ENCODE measurements at regions of chr12 and their contacts with region 1.

Region 1: DNA sequence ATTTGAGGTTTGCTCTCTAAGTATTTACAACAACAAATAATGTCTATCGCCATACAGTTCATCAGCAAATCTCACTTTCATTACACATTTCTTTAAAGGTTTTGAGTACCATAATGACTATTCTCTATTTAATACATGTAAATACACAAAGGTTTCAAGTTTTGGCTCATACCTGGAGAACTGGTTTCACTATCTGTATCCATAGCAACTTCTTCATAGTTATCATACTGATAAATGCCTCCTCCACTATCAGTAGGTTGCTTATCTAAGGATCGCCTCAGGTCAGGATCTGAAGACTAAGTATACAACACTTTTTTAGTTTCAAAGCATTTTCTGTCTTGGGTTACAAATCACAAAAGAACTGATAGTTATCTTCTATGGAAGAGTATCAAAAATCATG is 21.4 kb downstream of the ZFC3H1 start:
- DNase-seq: no peak
- ATAC-seq: no peak
- H3K4me3 Mint-ChIP-seq: no peak overlapping the region
- H3K27ac Mint-ChIP-seq: no peak overlapping the region
- H3K4me1 Mint-ChIP-seq: peaks cover 13% of the 10 kb centered on the region
- H3K27me3 Mint-ChIP-seq: no peaks in the 10 kb centered on the region
- CTCF ChIP-seq: no peak

Region 2: DNA sequence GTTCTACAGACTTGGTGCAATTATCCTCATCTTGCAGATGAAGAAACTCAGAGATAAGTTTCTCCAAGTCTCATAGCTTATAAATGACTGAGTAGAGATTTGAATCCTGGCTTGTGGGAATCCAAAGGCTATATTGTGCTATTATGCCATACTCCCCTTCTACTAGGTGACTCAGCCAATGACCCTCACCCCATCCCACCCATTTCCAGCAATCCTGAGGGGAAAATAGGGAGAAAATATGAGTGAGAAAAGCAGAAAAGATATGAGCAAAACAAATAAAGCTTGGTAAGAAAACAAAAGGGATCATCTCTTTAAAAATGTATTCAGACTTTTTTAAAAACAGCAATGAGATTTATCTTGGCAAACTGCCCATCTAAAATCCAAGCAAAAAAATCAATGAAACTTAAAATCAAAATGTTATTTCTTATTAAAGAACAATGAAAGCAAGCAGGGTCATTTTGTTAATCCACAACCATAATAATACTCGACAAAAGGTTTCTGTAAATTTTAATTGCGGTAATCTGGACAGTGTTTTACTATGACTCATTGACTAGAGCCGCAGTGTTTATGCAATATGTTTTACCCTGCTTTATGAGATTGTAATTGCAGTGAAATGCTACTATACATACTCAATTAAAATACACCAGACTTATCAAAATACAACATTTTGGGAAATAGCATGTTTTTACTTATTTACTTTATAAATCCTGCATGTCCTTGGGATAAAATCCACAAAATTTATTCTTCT is 215.8 kb before region 1 on chr12:
- CTCF ChIA-PET with region 1: no interaction called
- POLR2A ChIA-PET with region 1: no interaction called
- intact Hi-C with region 1: no loop called
- DNase-seq: no peak
- ATAC-seq: no peak
- H3K4me3 Mint-ChIP-seq: no peak overlapping the region
- H3K27ac Mint-ChIP-seq: no peak overlapping the region
- H3K4me1 Mint-ChIP-seq: no peaks in the 10 kb centered on the region
- H3K27me3 Mint-ChIP-seq: peaks cover 10% of the 10 kb centered on the region
- CTCF ChIP-seq: no peak

Region 3: DNA sequence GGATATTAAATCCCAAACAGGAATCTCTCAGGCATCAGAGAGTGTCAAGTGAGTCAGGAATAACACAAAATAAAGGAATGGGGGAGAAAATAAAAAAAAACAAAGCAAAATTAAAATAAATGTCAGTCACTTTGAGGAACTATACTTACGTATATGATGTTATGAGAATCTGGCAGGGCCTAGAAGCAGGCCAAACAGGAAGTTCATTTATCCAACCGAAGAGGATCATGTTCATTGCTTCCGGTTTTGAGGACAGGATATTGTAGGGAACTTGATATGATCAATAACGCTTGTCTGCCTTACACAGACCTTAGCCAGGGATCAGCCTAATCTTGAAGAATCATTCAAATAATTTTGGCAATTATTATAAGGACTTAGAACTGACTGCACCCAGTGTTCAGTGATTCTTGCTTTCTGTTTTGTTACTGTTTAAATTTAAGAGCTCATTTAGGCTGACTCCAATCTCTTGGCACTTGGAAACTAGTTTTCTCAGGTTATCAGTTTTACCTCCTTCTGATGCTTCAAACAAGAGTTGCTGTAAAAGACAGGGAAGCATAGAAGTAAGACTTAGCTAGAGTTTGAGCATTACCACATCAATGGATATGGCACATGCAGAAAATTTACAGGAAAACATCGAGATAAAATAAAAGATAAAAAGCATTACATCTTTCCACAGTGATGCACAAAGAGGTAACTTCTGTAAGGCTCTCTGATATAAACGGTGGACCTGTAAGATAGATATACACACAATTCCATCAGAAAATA is 32.1 kb before region 1 on chr12:
- CTCF ChIA-PET with region 1: no interaction called
- POLR2A ChIA-PET with region 1: no interaction called
- intact Hi-C with region 1: loop called (anchors 5 kb)
- DNase-seq: no peak
- ATAC-seq: peak; percentile 42
- H3K4me3 Mint-ChIP-seq: no peak overlapping the region
- H3K27ac Mint-ChIP-seq: peak overlapping the region; percentile 68
- H3K4me1 Mint-ChIP-seq: peaks cover 7% of the 10 kb centered on the region
- H3K27me3 Mint-ChIP-seq: no peaks in the 10 kb centered on the region
- CTCF ChIP-seq: no peak

Region 4: GRCh38 chr12:71626098-71626497 is 16.2 kb before region 1 on chr12:
- CTCF ChIA-PET with region 1: interaction called, 12 read pairs
- POLR2A ChIA-PET with region 1: interaction called, 3 read pairs
- intact Hi-C with region 1: loop called (anchors 2 kb)
- DNase-seq: no peak
- ATAC-seq: peak; percentile 58
- H3K4me3 Mint-ChIP-seq: no peak overlapping the region
- H3K27ac Mint-ChIP-seq: peak overlapping the region; percentile 67
- H3K4me1 Mint-ChIP-seq: peaks cover 21% of the 10 kb centered on the region
- H3K27me3 Mint-ChIP-seq: no peaks in the 10 kb centered on the region
- CTCF ChIP-seq: no peak